Mammary epithelial cell (primary cell): ENCODE measurements at regions of chr2 and their contacts with region 1.

Region 1: DNA sequence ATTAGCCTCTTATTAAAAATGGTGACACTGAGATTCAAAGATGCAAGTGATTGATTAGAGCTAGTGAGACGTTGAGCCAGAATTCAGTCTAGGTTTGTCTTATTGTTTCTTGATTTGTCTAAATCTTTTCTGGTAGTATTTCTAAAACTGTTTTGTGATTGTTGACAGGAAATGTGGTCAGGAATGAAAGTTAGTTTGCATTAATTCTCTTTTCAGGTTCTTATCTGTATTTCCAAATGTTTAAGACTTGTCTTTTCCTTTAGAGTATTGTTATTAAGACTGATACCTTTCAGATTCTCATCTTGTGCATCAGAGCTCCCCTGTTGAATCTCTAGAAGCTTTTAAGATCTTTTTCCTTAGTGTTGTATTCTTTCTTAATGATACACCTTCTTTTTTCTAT is 89.3 kb downstream of the MBD5 start:
- DNase-seq: no peak
- H3K4me3 ChIP-seq: no peak overlapping the region
- H3K27ac ChIP-seq: no peak overlapping the region
- H3K4me1 ChIP-seq: no peaks in the 10 kb centered on the region
- H3K27me3 ChIP-seq: no peaks in the 10 kb centered on the region
- CTCF ChIP-seq: no peak

Region 2: DNA sequence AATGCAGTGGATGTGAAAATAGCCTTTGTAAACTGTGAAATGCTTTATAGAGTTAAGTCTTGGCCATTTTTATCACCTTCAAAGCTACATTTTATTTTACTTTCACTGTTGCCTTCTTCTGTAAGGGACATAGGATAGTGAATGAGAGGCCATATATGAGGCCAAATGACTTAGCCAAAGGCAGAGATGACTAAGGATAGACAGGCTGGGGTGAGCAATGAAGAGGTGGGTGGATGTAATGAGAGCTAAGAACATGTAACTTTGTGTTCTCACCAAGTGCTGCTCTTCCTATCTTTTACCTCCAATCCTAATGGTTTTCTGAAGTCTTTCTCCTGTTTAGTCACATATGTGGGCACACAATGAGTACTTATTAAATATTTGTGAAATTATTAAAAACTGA is 12.6 kb after region 1 on chr2:
- CTCF ChIA-PET with region 1: no interaction called
- dilution Hi-C with region 1: no loop called
- in situ Hi-C with region 1: no loop called
- intact Hi-C with region 1: loop called (anchors 1 kb)
- DNase-seq: peak; percentile 80
- H3K4me3 ChIP-seq: no peak overlapping the region
- H3K27ac ChIP-seq: peak overlapping the region; percentile 20
- H3K4me1 ChIP-seq: peaks cover 15% of the 10 kb centered on the region
- H3K27me3 ChIP-seq: no peaks in the 10 kb centered on the region
- CTCF ChIP-seq: no peak

Region 3: GRCh38 chr2:148194882-148195281 is 84.7 kb after region 1 on chr2:
- CTCF ChIA-PET with region 1: no interaction called
- dilution Hi-C with region 1: no loop called
- in situ Hi-C with region 1: no loop called
- intact Hi-C with region 1: no loop called
- DNase-seq: no peak
- H3K4me3 ChIP-seq: no peak overlapping the region
- H3K27ac ChIP-seq: no peak overlapping the region
- H3K4me1 ChIP-seq: no peaks in the 10 kb centered on the region
- H3K27me3 ChIP-seq: no peaks in the 10 kb centered on the region
- CTCF ChIP-seq: no peak